Colonic mucosa (tissue), 4 donors: ENCODE measurements at regions of chr7 and their contacts with region 1.

Region 1: GRCh38 chr7:92691578-92691977 is 101.4 kb upstream of the FAM133B start:
- DNase-seq: peak; percentile 42
- H3K4me3 ChIP-seq: no peak overlapping the region
- H3K27ac ChIP-seq: no peak overlapping the region
- H3K4me1 ChIP-seq: peaks cover 5% of the 10 kb centered on the region
- H3K27me3 ChIP-seq: no peaks in the 10 kb centered on the region
- CTCF ChIP-seq: peak; percentile 50

Region 2: DNA sequence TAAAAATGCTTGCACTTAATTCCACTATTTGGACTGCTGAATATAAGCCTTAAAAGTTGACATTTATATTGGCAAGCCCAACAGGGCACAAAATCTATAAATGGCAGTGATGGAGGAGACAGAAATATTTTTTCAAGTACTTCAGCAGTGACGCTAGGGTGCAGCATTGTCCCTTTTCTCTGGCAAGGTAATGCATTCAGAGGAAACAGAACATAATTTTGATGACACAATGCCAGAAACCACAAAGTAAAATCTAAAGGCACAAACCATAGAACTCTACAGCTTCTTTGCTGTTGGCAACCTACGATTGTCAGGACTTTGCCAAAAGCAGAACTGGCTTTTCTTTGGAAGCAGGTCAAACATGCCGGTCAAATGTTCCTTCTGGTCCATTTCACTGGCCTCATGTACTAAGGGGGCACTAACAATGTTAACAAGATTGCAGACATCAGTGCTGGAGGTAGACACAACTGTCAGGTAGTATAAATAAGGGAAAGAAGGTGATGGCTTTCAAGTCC is 70.5 kb before region 1 on chr7:
- intact Hi-C with region 1: loop called (anchors 5 kb)
- DNase-seq: peak; percentile 77
- H3K4me3 ChIP-seq: no peak overlapping the region
- H3K27ac ChIP-seq: peak overlapping the region; percentile 2
- H3K4me1 ChIP-seq: no peaks in the 10 kb centered on the region
- H3K27me3 ChIP-seq: no peaks in the 10 kb centered on the region
- CTCF ChIP-seq: peak; percentile 64

Region 3: GRCh38 chr7:92833024-92833765 is 141.6 kb after region 1 on chr7:
- intact Hi-C with region 1: loop called (anchors 5 kb)
- DNase-seq: peak; percentile 94
- H3K4me3 ChIP-seq: peak overlapping the region; percentile 77
- H3K27ac ChIP-seq: peak overlapping the region; percentile 87
- H3K4me1 ChIP-seq: no peaks in the 10 kb centered on the region
- H3K27me3 ChIP-seq: no peaks in the 10 kb centered on the region
- CTCF ChIP-seq: peak; percentile 89

Region 4: GRCh38 chr7:93055543-93056107 is 364.0 kb after region 1 on chr7:
- intact Hi-C with region 1: loop called (anchors 5 kb)
- DNase-seq: no peak
- H3K4me3 ChIP-seq: no peak overlapping the region
- H3K27ac ChIP-seq: no peak overlapping the region
- H3K4me1 ChIP-seq: no peaks in the 10 kb centered on the region
- H3K27me3 ChIP-seq: no peaks in the 10 kb centered on the region
- CTCF ChIP-seq: peak; percentile 86